ENCODE measurements at regions of chr1 and their contacts with region 1.

Region 1: DNA sequence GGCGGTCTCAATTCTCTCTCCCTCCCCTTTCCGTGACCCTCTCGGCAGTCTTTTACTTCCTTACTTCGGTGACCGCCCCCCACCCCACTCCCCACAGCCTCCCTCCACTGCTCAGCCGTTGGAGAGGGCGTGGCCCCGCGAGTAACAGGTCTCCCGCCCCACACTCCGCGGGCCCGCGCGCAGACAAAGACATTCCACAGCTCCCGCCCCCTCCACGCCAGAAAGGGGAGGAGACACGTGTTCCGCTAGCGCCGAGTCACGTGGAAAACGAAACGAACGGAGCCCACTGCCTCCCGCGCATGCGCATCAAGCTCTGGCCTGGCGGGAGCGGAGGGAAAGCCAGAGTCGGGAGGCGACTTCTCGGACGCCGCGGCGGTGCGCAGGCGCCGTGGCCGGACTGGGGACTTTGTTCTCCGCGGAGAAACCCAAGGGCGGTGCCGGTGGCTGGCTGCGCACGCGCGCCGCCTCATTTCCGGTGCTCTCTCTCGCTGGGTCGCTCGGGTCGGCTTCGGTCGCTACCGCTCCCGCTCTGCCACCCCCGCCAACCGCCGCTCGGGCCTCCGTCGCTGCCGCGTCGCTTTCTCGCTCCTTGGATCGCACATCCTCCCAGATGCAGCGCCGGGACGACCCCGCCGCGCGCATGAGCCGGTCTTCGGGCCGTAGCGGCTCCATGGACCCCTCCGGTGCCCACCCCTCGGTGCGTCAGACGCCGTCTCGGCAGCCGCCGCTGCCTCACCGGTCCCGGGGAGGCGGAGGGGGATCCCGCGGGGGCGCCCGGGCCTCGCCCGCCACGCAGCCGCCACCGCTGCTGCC is at the start of gene KHDRBS1:
- DNase-seq: peak; percentile 99
- ATAC-seq: peak; percentile 87
- H3K4me3 Mint-ChIP-seq: peak within 1 kb of the TSS; percentile 98
- H3K27ac Mint-ChIP-seq: peak within 1 kb of the TSS; percentile 96
- H3K4me1 Mint-ChIP-seq: peaks cover 25% of the 10 kb centered on the region
- H3K27me3 Mint-ChIP-seq: no peaks in the 10 kb centered on the region
- total RNA-seq, gene KHDRBS1: 162 TPM

Region 2: DNA sequence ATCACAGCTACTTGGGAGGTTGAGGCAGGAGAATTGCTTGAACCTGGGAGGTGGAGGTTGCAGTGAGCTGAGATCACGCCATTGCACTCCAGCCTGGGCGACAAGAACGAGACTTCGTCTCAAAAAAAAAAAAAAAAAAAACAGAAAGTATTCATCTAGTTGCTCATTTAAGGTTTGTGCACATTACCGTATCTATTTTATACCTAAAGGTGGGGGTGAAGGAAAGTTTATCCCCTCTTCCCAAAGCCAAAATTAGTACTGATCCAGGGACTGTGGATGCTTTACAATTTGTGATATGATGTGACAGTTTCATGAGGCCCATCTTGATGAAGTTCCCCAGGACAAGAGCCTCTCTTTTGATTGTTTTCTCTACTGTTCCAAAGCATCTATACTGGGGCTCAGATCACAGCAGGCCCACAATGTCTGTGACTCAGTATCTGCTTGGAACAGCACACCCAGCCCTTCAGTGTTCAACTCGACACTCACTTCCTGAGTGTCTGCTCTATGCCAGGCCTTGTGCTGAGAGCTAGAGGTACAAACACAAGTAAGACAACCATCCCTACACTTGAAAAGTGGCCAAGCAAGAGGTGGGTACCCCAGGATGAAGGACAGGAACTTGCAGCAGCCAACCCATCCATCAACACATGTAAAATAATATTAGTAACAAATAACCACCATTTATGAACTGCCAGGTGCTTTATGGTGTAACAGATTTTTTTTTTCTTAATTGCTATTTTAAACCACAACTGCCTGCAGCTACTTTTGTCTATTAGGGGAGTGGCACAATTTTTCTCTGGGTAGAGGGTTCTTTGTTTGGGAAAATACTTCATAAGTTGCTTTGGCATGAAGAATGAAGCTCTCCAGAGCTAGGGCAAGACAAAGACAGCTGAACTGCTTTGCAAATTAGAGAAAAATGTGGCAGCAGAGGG is 28.9 kb before region 1 on chr1:
- POLR2A ChIA-PET with region 1: interaction called, 10 read pairs
- DNase-seq: no peak
- ATAC-seq: peak; percentile 63
- H3K4me3 Mint-ChIP-seq: peak overlapping the region; percentile 41
- H3K27ac Mint-ChIP-seq: peak overlapping the region; percentile 91
- H3K4me1 Mint-ChIP-seq: peaks cover 42% of the 10 kb centered on the region
- H3K27me3 Mint-ChIP-seq: no peaks in the 10 kb centered on the region

Region 3: DNA sequence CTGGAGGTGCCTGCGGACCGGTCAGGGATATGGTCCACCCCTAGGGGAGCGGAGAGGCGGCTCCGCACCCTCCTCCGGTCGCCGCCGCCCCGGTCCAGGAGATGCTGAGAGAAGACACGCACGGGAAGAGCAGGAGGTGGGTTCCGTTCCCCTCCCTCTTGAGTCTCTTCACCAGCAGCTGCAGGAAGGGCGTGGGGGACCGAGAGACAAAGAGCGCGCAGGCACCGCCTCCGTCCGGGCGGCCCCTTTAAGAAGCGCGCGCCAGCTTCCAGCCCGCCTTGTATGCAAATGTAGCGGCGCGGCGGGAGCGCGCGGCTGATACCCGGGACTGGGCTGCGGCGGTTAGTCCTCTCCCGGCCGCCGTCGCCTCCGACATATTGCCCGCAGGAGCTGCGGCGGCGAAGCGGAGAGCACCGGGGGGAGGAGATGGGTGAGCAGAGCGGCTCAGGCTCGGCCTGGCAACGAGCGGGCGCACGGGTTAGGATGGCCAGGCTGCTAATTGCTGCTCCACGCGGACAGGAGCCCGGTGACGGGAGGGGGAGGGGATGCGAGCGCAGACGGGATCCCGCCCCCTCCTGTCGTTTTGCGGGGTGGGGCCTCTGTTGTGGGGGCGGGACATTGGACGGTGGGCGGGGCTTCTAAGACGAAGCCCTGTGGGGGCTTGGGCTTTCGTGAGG is 59.2 kb after region 1 on chr1 and contains the start of gene TMEM39B:
- POLR2A ChIA-PET with region 1: interaction called, 12 read pairs
- DNase-seq: peak; percentile 97
- ATAC-seq: peak; percentile 89
- H3K4me3 Mint-ChIP-seq: peak within 1 kb of the TSS; percentile 94
- H3K27ac Mint-ChIP-seq: peak within 1 kb of the TSS; percentile 90
- H3K4me1 Mint-ChIP-seq: peaks cover 40% of the 10 kb centered on the region
- H3K27me3 Mint-ChIP-seq: peaks cover 10% of the 10 kb centered on the region
- total RNA-seq, gene TMEM39B: 27.1 to 28.4 TPM

Region 4: DNA sequence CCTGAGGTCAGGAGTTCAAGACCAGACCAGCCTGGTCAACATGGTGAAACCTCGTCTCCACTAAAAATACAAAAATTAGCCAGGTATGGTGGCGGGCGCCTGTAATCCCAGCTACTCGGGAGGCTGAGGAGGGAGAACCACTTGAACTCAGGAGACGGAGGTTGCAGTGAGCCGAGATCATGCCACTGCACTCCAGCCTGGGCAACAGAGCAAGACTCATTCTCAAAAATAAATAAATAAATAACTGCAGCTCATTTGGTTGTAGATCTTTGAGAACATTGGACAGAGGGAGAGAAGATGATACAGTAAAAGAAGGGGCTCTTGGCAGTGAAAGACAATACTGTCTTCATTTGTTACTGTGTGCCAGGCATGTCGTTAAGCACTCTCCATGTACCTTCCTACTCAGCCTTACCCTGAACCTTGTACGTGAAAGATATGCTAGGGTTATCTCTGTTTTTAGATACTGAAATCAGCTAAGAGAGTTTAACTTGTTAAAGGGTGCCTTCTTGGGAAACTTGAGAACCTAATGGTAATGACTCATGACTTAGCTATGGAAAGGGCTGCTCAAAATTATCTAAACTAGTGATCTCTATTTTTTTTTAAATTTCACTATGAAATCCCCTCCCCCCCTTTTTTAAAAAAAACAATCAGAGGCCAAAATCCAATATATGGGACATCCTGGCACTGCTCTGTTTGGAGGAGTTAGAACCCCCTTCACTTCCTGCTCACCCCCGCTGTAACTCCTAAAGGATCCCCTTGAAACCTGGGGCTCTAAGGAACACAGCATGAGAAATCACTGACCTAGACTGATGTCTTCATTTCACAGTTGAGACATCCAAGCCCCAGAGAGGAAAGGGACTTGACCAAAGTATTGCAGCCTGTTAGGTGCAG is 87.5 kb after region 1 on chr1:
- POLR2A ChIA-PET with region 1: no interaction called
- DNase-seq: no peak
- ATAC-seq: no peak
- H3K4me3 Mint-ChIP-seq: no peak overlapping the region
- H3K27ac Mint-ChIP-seq: no peak overlapping the region
- H3K4me1 Mint-ChIP-seq: peaks cover 6% of the 10 kb centered on the region
- H3K27me3 Mint-ChIP-seq: no peaks in the 10 kb centered on the region